ENCODE measurements at regions of chr12 and their contacts with region 1.

Region 1: DNA sequence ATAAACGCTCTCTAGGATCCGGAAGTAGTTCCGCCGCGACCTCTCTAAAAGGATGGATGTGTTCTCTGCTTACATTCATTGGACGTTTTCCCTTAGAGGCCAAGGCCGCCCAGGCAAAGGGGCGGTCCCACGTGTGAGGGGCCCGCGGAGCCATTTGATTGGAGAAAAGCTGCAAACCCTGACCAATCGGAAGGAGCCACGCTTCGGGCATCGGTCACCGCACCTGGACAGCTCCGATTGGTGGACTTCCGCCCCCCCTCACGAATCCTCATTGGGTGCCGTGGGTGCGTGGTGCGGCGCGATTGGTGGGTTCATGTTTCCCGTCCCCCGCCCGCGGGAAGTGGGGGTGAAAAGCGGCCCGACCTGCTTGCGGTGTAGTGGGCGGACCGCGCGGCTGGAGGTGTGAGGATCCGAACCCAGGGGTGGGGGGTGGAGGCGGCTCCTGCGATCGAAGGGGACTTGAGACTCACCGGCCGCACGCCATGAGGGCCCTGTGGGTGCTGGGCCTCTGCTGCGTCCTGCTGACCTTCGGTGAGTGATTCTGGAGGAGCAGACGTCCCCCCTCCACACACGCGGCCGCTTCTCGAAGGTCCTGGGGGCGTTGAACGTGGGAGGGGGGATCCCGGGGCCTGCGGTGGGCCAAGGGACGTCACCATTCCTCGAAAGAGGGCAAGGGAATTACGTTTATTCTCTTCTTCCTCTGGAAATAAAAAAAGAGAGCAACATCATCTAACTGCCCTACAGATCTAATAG is at the start of gene HSP90B1:
- DNase-seq: peak; percentile 100
- H3K4me3 ChIP-seq: peak within 1 kb of the TSS; percentile 70 to 87 (median 85)
- H3K27ac ChIP-seq: peak within 1 kb of the TSS; percentile 95
- H3K4me1 ChIP-seq: peaks cover 33% of the 10 kb centered on the region
- H3K27me3 ChIP-seq: no peaks in the 10 kb centered on the region
- CTCF ChIP-seq: no peak
- total RNA-seq, gene HSP90B1: 357 to 921 TPM

Region 2: GRCh38 chr12:103801709-103802585 is 128.3 kb before region 1 on chr12:
- CTCF ChIA-PET with region 1: no interaction called
- dilution Hi-C with region 1: no loop called
- in situ Hi-C with region 1: no loop called
- intact Hi-C with region 1: loop called (anchors 2 kb)
- DNase-seq: peak; percentile 100
- H3K4me3 ChIP-seq: peak overlapping the region in 1 of 3 experiments; percentile 2
- H3K27ac ChIP-seq: peak overlapping the region; percentile 96
- H3K4me1 ChIP-seq: peaks cover 80% of the 10 kb centered on the region
- H3K27me3 ChIP-seq: no peaks in the 10 kb centered on the region
- CTCF ChIP-seq: no peak

Region 3: DNA sequence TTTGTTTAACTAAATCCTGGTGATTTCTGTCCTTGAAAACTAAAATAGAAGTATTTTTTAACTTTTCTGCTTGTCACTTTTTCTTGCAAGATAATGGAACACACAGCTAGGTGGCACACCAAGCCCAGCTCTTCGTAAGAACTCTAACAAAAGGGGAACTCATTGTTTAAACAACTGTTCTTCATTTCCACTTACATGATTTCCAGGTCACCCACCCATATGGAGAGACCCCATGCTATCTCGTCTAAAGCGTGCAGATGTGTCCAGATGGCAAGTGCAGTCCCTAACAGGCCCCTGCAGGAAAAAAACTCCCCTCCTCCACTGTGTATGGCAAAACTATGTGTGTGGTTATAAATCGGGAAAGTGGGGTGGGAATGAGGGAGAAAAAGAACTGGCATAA is 45.9 kb before region 1 on chr12:
- CTCF ChIA-PET with region 1: no interaction called
- dilution Hi-C with region 1: no loop called
- in situ Hi-C with region 1: loop called in 1 of 2 experiments (anchors 10 kb)
- intact Hi-C with region 1: loop called (anchors 1 kb)
- DNase-seq: peak; percentile 16
- H3K4me3 ChIP-seq: no peak overlapping the region
- H3K27ac ChIP-seq: no peak overlapping the region
- H3K4me1 ChIP-seq: peaks cover 29% of the 10 kb centered on the region
- H3K27me3 ChIP-seq: no peaks in the 10 kb centered on the region
- CTCF ChIP-seq: peak; percentile 58 to 59

Region 4: GRCh38 chr12:103908866-103909265 is 21.3 kb before region 1 on chr12:
- CTCF ChIA-PET with region 1: interaction called, 7 read pairs
- dilution Hi-C with region 1: no loop called
- in situ Hi-C with region 1: no loop called
- intact Hi-C with region 1: loop called (anchors 1 kb)
- DNase-seq: no peak
- H3K4me3 ChIP-seq: no peak overlapping the region
- H3K27ac ChIP-seq: no peak overlapping the region
- H3K4me1 ChIP-seq: peaks cover 27% of the 10 kb centered on the region
- H3K27me3 ChIP-seq: no peaks in the 10 kb centered on the region
- CTCF ChIP-seq: no peak

Region 5: DNA sequence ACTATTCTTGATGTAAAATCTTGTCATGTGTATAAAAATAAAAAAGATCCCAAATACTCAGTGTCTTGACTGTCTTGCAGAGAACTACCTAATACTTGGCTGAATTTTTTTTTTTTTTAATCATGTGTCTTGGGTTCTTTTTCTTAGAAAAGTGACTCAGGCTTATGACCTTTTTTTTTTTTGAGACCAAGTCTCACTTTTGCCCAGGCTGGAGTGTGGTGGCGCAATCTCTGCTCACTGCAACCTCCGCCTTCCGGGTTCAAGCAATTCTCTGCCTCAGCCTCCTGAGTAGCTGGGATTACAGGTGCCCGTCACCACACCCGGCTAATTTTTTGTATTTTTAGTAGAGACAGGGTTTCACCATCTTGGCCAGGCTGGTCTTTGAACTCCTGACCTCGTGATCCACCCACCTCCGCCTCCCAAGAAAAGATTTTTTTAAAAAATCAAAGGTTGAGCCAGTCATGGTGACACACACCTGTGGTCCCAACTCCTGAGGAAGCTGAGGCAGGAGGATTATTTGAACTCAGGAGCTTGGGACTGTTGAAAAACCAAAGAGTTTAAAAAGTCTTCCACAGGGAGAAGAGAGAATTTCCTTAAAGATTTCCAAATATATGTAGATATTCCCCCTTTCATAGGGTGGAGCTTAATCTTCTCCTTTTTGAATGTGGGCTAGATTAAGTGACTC is 17.8 kb after region 1 on chr12:
- CTCF ChIA-PET with region 1: no interaction called
- dilution Hi-C with region 1: no loop called
- in situ Hi-C with region 1: no loop called
- intact Hi-C with region 1: no loop called
- DNase-seq: no peak
- H3K4me3 ChIP-seq: no peak overlapping the region
- H3K27ac ChIP-seq: no peak overlapping the region
- H3K4me1 ChIP-seq: no peaks in the 10 kb centered on the region
- H3K27me3 ChIP-seq: no peaks in the 10 kb centered on the region
- CTCF ChIP-seq: no peak

Region 6: DNA sequence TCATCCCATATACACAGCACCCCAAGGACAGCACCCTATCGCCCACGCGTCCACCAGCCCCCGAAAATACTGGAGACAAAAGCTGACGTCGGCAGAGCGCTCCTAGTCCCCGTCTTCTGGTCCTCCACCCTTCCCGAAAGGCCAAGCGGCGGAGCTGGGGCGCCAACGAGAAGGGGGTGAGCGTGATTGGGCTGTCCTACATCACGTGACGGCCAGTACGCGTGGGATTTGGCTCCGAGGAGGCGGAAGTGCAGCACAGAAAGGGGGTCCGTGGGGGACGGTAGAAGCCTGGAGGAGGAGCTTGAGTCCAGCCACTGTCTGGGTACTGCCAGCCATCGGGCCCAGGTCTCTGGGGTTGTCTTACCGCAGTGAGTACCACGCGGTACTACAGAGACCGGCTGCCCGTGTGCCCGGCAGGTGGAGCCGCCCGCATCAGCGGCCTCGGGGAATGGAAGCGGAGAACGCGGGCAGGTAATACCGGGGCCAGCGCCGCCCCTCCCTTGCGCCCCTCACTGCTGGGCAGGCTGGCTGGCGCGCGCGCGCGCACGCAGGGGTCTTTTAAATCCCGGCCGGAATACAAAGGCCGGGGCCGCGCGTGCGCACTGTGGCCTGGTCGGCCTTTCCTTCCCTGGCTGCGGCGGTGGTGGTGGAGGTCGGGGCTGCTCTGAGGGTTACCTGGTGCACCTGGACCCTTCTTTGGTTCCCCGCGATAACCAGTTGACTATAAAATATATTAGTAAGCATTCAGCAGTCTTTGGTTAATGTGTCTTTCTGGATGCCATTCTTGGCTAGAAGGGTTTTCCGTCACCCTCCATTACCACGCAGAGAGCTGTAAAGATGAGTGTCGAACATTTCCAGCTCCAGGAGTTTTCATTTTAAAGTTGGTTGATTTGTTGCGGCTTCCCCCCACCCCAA is 35.6 kb after region 1 on chr12 and contains the start of gene TDG:
- CTCF ChIA-PET with region 1: no interaction called
- dilution Hi-C with region 1: no loop called
- in situ Hi-C with region 1: no loop called
- intact Hi-C with region 1: loop called (anchors 2 kb)
- DNase-seq: peak; percentile 98
- H3K4me3 ChIP-seq: peak within 1 kb of the TSS; percentile 82 to 91 (median 89)
- H3K27ac ChIP-seq: peak within 1 kb of the TSS; percentile 88
- H3K4me1 ChIP-seq: peaks cover 12% of the 10 kb centered on the region
- H3K27me3 ChIP-seq: no peaks in the 10 kb centered on the region
- CTCF ChIP-seq: peak in 1 of 2 donors; percentile 37
- total RNA-seq, gene TDG: 27.3 to 42.0 TPM

Region 7: DNA sequence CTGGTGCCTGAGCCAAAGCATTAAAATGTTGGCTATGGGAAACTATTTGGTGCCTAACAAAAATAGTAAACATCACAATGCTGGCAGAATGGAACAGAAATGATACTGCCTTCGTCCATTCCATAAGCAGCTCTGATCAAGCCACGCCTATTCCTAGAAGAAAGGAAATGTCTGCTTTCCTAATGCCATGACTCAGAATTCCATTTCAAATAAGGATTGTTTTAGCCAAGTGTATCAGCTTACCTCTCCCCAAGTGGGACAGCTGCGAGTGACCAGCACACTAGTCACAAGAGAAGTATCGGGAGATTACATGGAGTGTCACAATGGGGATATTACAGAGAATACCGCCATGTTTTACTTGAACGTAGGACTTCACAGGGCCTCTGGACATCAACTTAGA is 81.1 kb after region 1 on chr12:
- CTCF ChIA-PET with region 1: no interaction called
- dilution Hi-C with region 1: no loop called
- in situ Hi-C with region 1: no loop called
- intact Hi-C with region 1: no loop called
- DNase-seq: peak; percentile 88
- H3K4me3 ChIP-seq: no peak overlapping the region
- H3K27ac ChIP-seq: peak overlapping the region; percentile 55
- H3K4me1 ChIP-seq: peaks cover 21% of the 10 kb centered on the region
- H3K27me3 ChIP-seq: no peaks in the 10 kb centered on the region
- CTCF ChIP-seq: no peak

Region 8: DNA sequence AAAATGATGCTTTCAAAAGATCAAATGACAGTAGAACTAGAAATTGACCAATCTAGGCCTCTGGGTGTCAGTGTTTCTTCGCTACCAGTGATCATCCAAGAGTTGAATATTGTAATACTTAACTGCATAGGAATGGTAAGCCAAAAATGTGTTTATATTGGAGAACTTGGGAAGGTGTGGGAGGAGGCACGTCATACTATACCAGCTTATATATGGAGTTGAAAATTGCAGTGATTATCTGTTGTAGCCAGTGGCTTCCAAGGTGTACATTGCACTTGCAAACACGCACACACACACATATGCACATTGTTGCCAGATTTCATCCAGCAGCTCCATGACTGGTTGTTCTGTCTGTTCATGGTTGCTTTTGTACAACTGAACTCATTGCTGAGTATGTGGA is 409.5 kb after region 1 on chr12:
- CTCF ChIA-PET with region 1: no interaction called
- dilution Hi-C with region 1: no loop called
- in situ Hi-C with region 1: loop called in 1 of 2 experiments (anchors 25 kb)
- intact Hi-C with region 1: no loop called
- DNase-seq: no peak
- H3K4me3 ChIP-seq: no peak overlapping the region
- H3K27ac ChIP-seq: no peak overlapping the region
- H3K4me1 ChIP-seq: no peaks in the 10 kb centered on the region
- H3K27me3 ChIP-seq: no peaks in the 10 kb centered on the region
- CTCF ChIP-seq: no peak

Region 9: DNA sequence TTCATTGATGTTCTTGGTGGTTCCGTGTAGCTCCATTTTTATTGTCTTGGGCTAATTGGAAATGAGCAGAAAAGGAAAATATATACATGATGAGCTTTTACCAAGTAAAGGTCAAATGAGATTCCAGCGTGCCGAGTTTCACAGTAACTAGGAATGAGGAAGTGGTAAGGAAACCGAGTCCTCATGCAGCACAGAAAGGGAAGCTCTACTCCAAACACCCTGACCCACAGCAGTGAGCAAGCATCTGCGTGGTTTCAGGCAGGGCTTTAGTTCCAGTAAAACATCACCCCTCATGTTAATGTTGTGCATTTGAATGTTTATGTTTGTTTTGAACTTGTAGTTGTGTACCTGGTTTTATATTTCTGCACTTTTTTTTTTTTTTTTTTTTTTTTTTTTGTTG is 819.9 kb after region 1 on chr12:
- CTCF ChIA-PET with region 1: no interaction called
- dilution Hi-C with region 1: no loop called
- in situ Hi-C with region 1: no loop called
- intact Hi-C with region 1: no loop called
- DNase-seq: no peak
- H3K4me3 ChIP-seq: no peak overlapping the region
- H3K27ac ChIP-seq: no peak overlapping the region
- H3K4me1 ChIP-seq: no peaks in the 10 kb centered on the region
- H3K27me3 ChIP-seq: no peaks in the 10 kb centered on the region
- CTCF ChIP-seq: no peak

Region 10: DNA sequence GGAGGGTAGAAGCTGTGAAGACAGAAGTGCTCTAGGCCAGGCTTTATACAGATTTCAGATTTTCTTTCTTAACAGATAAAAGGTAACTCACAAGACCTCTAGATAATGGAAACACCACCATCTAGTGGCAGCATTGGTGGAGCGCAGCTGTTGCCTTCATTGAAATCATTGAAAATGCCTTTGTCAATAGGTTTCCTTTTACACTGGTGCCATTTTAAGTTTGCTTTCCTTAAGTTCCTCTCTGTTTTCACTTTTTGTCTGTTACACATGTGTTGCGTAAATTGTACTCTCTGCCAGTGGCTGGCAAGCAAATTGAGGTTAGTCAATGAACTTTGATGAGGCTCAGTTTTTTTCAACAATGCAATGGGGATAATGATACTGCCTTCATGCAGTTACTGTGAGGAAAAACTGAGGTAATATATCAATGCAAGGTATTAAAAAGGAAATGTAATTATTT is 1122.9 kb after region 1 on chr12:
- CTCF ChIA-PET with region 1: no interaction called
- dilution Hi-C with region 1: no loop called
- in situ Hi-C with region 1: loop called in 1 of 2 experiments (anchors 25 kb)
- intact Hi-C with region 1: no loop called
- DNase-seq: peak; percentile 61
- H3K4me3 ChIP-seq: no peak overlapping the region
- H3K27ac ChIP-seq: no peak overlapping the region
- H3K4me1 ChIP-seq: no peaks in the 10 kb centered on the region
- H3K27me3 ChIP-seq: no peaks in the 10 kb centered on the region
- CTCF ChIP-seq: peak; percentile 88 to 97

Measured in mammary epithelial cell (primary cell).